Adrenal gland (tissue), 19 donors: ENCODE measurements at regions of chr3 and their contacts with region 1.

Region 1: DNA sequence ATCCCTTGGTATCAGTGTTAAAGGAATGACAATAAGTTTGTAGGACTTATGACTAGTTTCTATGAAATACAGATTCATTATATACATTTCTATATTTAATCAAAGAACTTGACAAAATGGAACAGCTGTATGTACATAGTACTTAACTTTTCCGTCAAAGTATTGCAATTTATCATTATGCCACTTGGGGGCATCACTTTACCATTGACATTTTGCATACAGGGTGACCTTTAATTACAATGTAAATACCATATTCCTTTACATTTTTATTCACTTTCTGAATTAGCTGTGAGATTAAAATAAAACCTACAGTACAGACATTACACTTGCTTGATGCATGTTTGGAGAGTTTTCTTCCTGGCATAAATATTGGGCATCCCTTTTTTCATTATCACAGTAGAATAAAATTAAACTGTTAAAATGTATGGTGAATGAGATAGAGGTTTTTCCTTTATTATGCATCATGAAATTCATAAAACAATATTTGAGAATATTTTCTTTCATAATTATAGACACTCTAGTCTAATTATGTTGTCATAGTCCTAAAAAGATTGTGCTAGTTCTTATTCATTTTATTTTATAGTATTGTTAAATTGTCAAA is 6.9 kb downstream of the NEK11 start:
- DNase-seq: no peak
- H3K4me3 ChIP-seq: no peak overlapping the region
- H3K27ac ChIP-seq: no peak overlapping the region
- H3K4me1 ChIP-seq: peaks cover 6 to 9% of the 10 kb centered on the region in 2 donors
- H3K27me3 ChIP-seq: no peaks in the 10 kb centered on the region
- CTCF ChIP-seq: peak in 5 of 6 experiments; percentile 32 to 66 (median 46)
- POLR2A ChIP-seq: no peak

Region 2: GRCh38 chr3:129162729-129163579 is 1870.6 kb before region 1 on chr3:
- intact Hi-C with region 1: no loop called
- DNase-seq: no peak
- H3K4me3 ChIP-seq: no peak overlapping the region
- H3K27ac ChIP-seq: peak overlapping the region in 1 of 5 donors; percentile 96
- H3K4me1 ChIP-seq: peaks cover 17% of the 10 kb centered on the region in 2 donors
- H3K27me3 ChIP-seq: no peaks in the 10 kb centered on the region
- CTCF ChIP-seq: peak in 2 of 6 experiments; percentile 13 to 16
- POLR2A ChIP-seq: no peak

Region 3: DNA sequence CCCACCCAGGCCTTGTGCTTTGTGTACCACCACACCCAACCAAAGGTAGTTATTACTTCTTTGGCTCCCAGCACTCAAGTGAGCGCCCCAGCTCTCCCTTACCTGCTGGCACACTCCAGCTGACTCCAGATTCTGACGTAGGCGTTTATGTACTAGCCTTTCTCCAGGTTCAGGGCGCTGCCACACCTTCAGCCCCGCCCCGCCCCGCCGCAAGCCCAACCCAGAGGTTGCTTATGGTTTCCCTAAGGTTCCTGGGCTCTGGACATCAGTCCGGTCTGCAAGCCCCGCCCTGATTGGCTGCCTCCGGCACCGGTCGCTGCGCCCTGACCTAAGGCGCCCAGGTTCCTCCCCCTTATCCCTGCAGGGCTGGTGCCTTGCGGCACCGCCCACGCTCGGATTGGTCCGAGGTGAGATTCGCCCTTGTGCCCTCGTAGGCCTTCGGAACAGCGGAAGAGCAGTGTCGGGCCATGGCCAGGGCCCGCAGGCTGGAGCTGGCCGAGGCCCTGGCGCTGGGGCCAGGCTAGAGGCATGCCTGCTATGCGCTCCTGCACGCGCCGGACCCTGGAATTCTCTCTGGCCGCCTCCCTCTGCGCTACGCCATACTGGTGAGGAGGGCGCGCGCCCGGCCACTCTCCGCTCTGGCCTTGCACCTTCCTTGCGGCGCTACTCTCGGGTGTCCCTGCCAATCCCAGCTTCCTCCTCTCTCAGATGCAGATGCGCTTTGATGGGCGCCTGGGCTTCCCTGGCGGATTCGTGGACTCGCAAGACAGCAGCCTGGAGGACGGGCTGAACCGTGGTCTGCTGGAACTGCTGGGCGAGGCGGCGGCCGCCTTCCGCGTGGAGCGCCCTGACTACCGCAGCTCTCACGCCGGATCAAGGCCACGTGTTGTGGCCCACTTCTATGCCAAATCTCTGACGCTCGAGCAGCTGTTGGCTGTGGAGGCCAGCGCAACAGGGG is 328.2 kb after region 1 on chr3:
- intact Hi-C with region 1: loop called in 1 of 2 experiments (anchors 10 kb)
- DNase-seq: peak; percentile 58 to 94 (median 84)
- H3K4me3 ChIP-seq: peak overlapping the region in 2 of 4 donors; percentile 43 to 57
- H3K27ac ChIP-seq: peak overlapping the region in 4 of 5 donors; percentile 13 to 82 (median 51)
- H3K4me1 ChIP-seq: peaks cover 8 to 12% of the 10 kb centered on the region in 2 donors
- H3K27me3 ChIP-seq: no peaks in the 10 kb centered on the region
- CTCF ChIP-seq: no peak
- POLR2A ChIP-seq: peak; percentile 44 to 53